Activated T-helper 2 cell treated with anti-CD3 and anti-CD28 coated beads, Interferon-gamma antibody, Interleukin-2, Interleukin-4, amounts not matched to agents 10 μg/mL and 5 μg/mL and 100 μg/mL, durations not matched to agents 14 hours and 24 hours and 36 hours (primary cell): ENCODE measurements at regions of chr16 and their contacts with region 1.

Region 1: DNA sequence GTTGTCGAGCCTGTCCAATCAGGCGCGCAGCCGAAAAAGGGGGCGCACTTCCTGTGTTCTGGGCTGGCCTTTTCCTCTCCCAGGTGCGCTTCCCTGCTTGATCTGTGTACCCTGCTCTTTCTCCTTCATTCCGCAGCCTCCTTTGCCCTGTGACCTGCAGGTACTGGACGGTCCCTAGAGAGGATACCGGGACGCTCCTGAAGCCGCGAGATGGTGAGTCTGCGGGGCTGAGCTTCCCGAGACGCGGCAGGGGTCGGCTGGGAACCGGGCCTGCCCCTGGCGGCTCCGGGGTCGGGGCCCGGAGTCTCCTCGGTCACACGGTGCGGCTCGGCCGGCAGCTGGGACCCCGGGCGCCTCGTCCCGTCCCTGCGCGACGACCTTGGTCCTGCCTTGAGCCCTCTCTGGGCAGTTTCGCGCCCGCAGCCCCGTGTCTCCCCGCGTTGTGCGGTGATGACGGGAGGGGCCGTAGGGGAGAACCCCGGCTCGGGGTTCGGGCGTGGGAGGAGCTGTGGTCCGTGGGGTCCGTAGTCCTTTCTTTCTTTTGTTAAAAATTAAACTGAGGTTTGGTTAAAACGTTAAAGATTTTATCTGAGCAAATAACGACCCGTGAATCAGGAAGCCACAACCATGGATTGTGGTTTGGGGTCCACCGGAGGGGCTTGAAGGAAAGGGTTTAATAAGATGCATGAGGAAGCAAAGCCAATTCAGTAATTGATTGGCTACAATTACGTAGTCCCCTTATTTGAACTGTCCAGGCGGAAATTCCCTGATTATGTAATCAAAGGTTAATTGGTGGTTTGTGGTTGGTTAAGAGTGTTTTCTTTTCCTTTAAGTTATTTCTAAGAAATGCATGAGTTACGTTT is 172.8 kb upstream of the ZNF267 start:
- DNase-seq: peak; percentile 68
- H3K4me3 Mint-ChIP-seq: peak overlapping the region; percentile 85
- H3K27ac Mint-ChIP-seq: peak overlapping the region; percentile 89
- H3K4me1 Mint-ChIP-seq: peaks cover 26% of the 10 kb centered on the region
- H3K27me3 Mint-ChIP-seq: peaks cover 20% of the 10 kb centered on the region

Region 2: DNA sequence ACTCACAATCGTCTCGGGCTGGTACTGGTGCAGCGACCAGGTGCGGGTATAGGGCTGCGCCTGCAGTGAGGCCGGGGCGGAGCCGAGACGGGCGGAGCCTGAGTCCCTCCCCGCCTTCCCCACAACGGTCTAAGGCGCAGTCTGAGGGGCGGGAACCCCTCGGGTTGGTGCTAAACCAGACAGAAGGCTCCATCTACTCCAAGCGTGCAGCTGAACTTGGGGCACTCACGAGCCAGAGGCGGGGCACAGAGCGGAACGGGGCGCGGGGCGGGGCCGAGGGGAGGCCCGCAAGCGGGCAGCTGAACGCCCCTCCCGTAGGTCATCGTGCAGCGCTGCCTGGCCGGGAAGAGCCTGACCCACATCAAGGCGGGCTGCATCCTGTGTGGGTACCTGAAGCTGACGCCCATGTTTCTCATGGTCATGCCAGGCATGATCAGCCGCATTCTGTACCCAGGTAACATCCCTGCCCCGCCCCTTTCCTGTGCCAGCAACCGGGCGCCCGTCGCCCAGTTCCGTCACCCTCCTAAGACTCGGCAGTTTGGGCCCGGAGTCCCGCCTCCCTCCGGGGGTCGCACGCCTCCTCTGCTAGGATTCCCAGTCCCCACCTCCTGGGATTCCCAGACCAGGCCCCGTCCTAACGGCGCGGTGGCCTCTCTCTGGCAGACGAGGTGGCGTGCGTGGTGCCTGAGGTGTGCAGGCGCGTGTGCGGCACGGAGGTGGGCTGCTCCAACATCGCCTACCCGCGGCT is 212.9 kb before region 1 on chr16:
- intact Hi-C with region 1: no loop called
- DNase-seq: peak; percentile 50
- H3K4me3 Mint-ChIP-seq: peak overlapping the region; percentile 82
- H3K27ac Mint-ChIP-seq: no peak overlapping the region
- H3K4me1 Mint-ChIP-seq: peaks cover 3% of the 10 kb centered on the region
- H3K27me3 Mint-ChIP-seq: peaks cover 8% of the 10 kb centered on the region

Region 3: GRCh38 chr16:31507929-31508705 is 192.6 kb before region 1 on chr16 and contains the start of gene RUSF1:
- intact Hi-C with region 1: loop called (anchors 5 kb)
- DNase-seq: peak; percentile 80
- H3K4me3 Mint-ChIP-seq: peak within 1 kb of the TSS; percentile 94
- H3K27ac Mint-ChIP-seq: peak within 1 kb of the TSS; percentile 91
- H3K4me1 Mint-ChIP-seq: peaks cover 30% of the 10 kb centered on the region
- H3K27me3 Mint-ChIP-seq: no peaks in the 10 kb centered on the region
- total RNA-seq, gene RUSF1: 41.2 and 43.8 TPM in 2 replicates

Region 4: GRCh38 chr16:31718998-31719397 is 18.2 kb after region 1 on chr16:
- intact Hi-C with region 1: no loop called
- DNase-seq: no peak
- H3K4me3 Mint-ChIP-seq: no peak overlapping the region
- H3K27ac Mint-ChIP-seq: no peak overlapping the region
- H3K4me1 Mint-ChIP-seq: peaks cover 21% of the 10 kb centered on the region
- H3K27me3 Mint-ChIP-seq: no peaks in the 10 kb centered on the region